AG04450 (cell line): ENCODE measurements at regions of chr22 and their contacts with region 1.

Region 1: DNA sequence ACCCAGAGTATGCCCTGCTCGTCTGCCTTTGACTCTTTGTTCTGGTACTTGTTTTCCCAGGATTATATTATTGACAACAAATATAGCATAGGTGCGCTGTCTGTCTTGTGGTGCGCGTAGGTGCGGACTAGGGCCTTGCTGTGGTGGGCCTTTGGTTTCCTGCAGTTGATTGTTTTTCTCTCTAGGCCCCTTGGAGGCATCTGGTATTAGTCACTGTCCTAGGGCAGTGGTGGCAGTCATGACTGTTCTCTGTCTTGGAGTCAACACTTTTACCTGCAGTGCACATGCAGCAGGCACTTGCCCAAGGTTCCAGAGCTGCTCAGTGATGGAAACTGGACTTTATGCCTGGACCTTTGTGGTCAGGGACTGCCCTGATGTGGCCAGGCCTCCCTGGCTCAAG is 18.6 kb downstream of the PPP6R2 start:
- DNase-seq: no peak
- H3K4me3 ChIP-seq: no peak overlapping the region
- H3K27ac ChIP-seq: no peak overlapping the region
- H3K27me3 ChIP-seq: no peaks in the 10 kb centered on the region
- CTCF ChIP-seq: no peak

Region 2: GRCh38 chr22:50250555-50251476 is 110.9 kb before region 1 on chr22 and contains the start of gene HDAC10:
- CTCF ChIA-PET with region 1: interaction called, 10 read pairs
- POLR2A ChIA-PET with region 1: no interaction called
- DNase-seq: no peak
- H3K4me3 ChIP-seq: peak within 1 kb of the TSS; percentile 85
- H3K27ac ChIP-seq: peak within 1 kb of the TSS; percentile 61
- H3K27me3 ChIP-seq: no peaks in the 10 kb centered on the region
- CTCF ChIP-seq: no peak
- polyA plus RNA-seq, gene HDAC10: 7.0 and 9.9 TPM in 2 replicates